Natural killer cell (primary cell): ENCODE measurements at regions of chr9 and their contacts with region 1.

Region 1: GRCh38 chr9:92634712-92635605 is 35.0 kb downstream of the IPPK start:
- DNase-seq: peak; percentile 52 to 76
- ATAC-seq: peak; percentile 62 to 84 (median 79)
- H3K4me3 ChIP-seq: no peak overlapping the region
- H3K4me3 Mint-ChIP-seq: no peak overlapping the region
- H3K27ac ChIP-seq: no peak overlapping the region
- H3K27ac Mint-ChIP-seq: no peak overlapping the region
- H3K4me1 ChIP-seq: no peaks in the 10 kb centered on the region
- H3K4me1 Mint-ChIP-seq: peaks cover 0 to 3% of the 10 kb centered on the region in 2 donors
- H3K27me3 ChIP-seq: no peaks in the 10 kb centered on the region
- H3K27me3 Mint-ChIP-seq: no peaks in the 10 kb centered on the region
- CTCF ChIP-seq: peak; percentile 73

Region 2: GRCh38 chr9:92140074-92140753 is 494.7 kb before region 1 on chr9:
- intact Hi-C with region 1: loop called (anchors 2 kb)
- DNase-seq: peak; percentile 64 to 79
- ATAC-seq: peak; percentile 77 to 87 (median 83)
- H3K4me3 ChIP-seq: no peak overlapping the region
- H3K4me3 Mint-ChIP-seq: no peak overlapping the region
- H3K27ac ChIP-seq: no peak overlapping the region
- H3K27ac Mint-ChIP-seq: no peak overlapping the region
- H3K4me1 ChIP-seq: peaks cover 11% of the 10 kb centered on the region
- H3K4me1 Mint-ChIP-seq: peaks cover 15 to 16% of the 10 kb centered on the region in 2 donors
- H3K27me3 ChIP-seq: peaks cover 6% of the 10 kb centered on the region
- H3K27me3 Mint-ChIP-seq: peaks cover 33 to 35% of the 10 kb centered on the region in 2 donors
- CTCF ChIP-seq: peak; percentile 93

Region 3: DNA sequence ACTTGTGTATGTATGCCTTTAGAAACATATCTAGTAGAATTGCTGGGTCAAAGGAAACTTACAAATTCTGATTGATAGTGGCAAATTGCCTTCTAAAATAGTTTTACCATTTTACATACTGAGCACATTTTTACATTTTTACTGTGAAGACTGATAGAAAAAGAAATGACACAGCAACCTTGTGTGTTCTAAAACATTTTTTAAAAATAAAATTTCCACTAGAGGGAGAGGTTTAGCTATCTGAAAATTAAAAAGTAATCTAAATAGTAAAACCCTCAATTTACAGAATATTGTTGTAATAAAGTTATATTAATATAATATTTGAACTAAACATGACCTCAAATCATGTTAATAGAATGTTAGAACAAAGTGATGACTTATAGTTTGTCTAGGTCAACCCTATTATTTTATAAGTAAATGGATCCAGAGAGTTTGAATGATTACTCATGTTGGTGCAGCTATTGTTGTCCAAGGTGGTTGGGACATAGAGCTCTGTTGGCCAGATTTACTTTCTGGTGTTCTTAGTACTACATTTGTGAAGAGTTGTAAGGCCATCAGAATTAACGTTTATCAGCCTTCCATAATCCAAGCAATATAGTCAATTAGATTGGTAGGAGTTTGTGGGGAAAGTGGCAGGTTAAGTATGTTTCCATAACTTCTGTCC is 292.0 kb before region 1 on chr9:
- intact Hi-C with region 1: loop called (anchors 5 kb)
- DNase-seq: no peak
- ATAC-seq: no peak
- H3K4me3 ChIP-seq: no peak overlapping the region
- H3K4me3 Mint-ChIP-seq: no peak overlapping the region
- H3K27ac ChIP-seq: no peak overlapping the region
- H3K27ac Mint-ChIP-seq: no peak overlapping the region
- H3K4me1 ChIP-seq: no peaks in the 10 kb centered on the region
- H3K4me1 Mint-ChIP-seq: no peaks in the 10 kb centered on the region
- H3K27me3 ChIP-seq: no peaks in the 10 kb centered on the region
- H3K27me3 Mint-ChIP-seq: no peaks in the 10 kb centered on the region
- CTCF ChIP-seq: no peak